Ascending aorta (tissue), 2 donors: ENCODE measurements at regions of chr2 and their contacts with region 1.

Region 1: GRCh38 chr2:65974067-65974723 is 460.7 kb upstream of the MEIS1 start:
- DNase-seq: no peak
- H3K4me3 ChIP-seq: no peak overlapping the region
- H3K27ac ChIP-seq: no peak overlapping the region
- H3K4me1 ChIP-seq: no peaks in the 10 kb centered on the region
- H3K27me3 ChIP-seq: no peaks in the 10 kb centered on the region
- CTCF ChIP-seq: no peak

Region 2: DNA sequence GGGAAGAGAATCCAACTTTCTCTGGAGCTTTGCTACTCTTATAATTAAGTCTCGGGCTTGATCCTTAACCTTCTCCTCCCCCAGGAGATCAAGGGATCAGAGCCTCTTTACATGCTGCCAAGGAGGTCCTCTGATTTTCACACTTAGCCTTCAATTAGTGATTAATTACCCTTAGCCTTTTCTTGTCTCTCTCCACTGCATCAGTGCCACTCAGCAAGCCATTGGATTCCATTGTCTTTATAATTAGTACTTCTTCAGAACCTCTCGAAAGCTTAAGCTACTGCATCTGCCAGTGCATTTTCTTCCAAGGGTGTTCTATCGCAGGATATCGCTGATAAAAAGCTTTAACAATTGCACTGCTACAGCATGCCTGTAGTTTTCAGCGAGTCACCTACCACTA is 16.3 kb before region 1 on chr2:
- intact Hi-C with region 1: loop called (anchors 1 kb)
- DNase-seq: no peak
- H3K4me3 ChIP-seq: no peak overlapping the region
- H3K27ac ChIP-seq: no peak overlapping the region
- H3K4me1 ChIP-seq: no peaks in the 10 kb centered on the region
- H3K27me3 ChIP-seq: no peaks in the 10 kb centered on the region
- CTCF ChIP-seq: no peak

Region 3: DNA sequence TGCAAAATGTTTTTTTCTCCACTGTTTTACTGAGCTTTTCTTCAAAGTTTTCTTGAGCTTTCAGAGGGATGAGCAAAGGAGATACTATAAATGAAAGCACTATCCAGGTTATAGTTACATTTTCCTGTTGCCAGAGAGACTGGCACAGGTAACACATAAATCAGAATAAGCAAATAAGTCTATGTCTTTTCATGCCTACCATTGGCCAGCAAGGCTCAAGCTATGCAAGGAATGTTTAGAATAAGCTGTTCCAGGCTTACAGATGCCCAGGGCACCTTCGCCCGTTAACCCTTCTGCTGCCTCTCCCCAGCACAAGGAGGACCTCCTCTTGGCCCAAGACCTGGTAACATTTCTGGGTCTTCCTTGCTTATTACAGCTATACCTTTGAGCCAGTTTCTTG is 227.0 kb after region 1 on chr2:
- intact Hi-C with region 1: no loop called
- DNase-seq: no peak
- H3K4me3 ChIP-seq: no peak overlapping the region
- H3K27ac ChIP-seq: no peak overlapping the region
- H3K4me1 ChIP-seq: no peaks in the 10 kb centered on the region
- H3K27me3 ChIP-seq: no peaks in the 10 kb centered on the region
- CTCF ChIP-seq: no peak